Sigmoid colon (tissue), 7 donors: ENCODE measurements at regions of chr19 and their contacts with region 1.

Region 1: GRCh38 chr19:48492925-48493717 is 18.5 kb downstream of the LMTK3 start:
- DNase-seq: peak; percentile 98
- H3K4me3 ChIP-seq: peak overlapping the region; percentile 39 to 56 (median 50)
- H3K27ac ChIP-seq: peak overlapping the region; percentile 64 to 83 (median 75)
- H3K4me1 ChIP-seq: peaks cover 0 to 35% (median 29%) of the 10 kb centered on the region in 4 donors
- H3K27me3 ChIP-seq: peaks cover 5 to 44% (median 21%) of the 10 kb centered on the region in 3 donors
- CTCF ChIP-seq: no peak
- EP300 ChIP-seq: no peak
- POLR2A ChIP-seq: peak in 1 of 2 donors; percentile 73

Region 2: GRCh38 chr19:48391107-48391986 is 101.8 kb before region 1 on chr19 and contains the start of gene KDELR1:
- intact Hi-C with region 1: loop called (anchors 5 kb)
- DNase-seq: peak; percentile 89
- H3K4me3 ChIP-seq: peak within 1 kb of the TSS; percentile 74 to 98 (median 90)
- H3K27ac ChIP-seq: peak within 1 kb of the TSS; percentile 87 to 94 (median 93)
- H3K4me1 ChIP-seq: peaks cover 0 to 36% (median 30%) of the 10 kb centered on the region in 4 donors
- H3K27me3 ChIP-seq: peaks cover 26 to 45% (median 43%) of the 10 kb centered on the region in 3 donors
- CTCF ChIP-seq: peak in 3 of 4 experiments; percentile 68 to 93 (median 75)
- EP300 ChIP-seq: no peak
- POLR2A ChIP-seq: peak; percentile 64 to 70
- total RNA-seq, gene KDELR1: 61.5 to 109 (median 71.1) TPM

Region 3: DNA sequence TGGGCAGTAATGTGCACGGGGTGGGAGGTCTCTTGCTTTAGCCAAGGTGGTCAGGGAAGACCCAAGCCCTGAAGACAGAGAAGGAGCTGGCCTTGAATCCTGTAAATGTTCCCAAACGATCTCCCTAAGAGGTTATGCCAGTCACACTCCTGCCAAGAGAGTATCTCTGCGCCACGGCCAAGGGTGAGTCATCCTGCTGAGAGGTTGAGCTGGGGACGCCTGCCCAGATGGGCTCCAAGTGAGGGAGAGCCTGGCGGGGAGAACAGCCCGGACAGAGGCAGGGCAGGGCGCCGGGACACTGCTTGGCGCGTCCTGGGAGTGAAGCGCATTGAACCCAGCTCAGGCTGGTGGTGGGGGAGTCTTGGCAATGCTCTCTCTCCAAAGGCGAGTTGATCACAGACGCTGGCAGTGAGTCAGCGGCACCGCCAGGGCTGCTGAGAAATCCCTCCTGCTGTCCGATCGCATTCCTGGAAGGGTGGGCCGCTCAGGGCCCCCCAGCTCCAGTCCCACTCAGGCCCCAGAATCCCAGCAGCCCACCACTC is 75.3 kb after region 1 on chr19:
- intact Hi-C with region 1: loop called (anchors 5 kb)
- DNase-seq: peak; percentile 95
- H3K4me3 ChIP-seq: no peak overlapping the region
- H3K27ac ChIP-seq: peak overlapping the region; percentile 74 to 86 (median 80)
- H3K4me1 ChIP-seq: peaks cover 0 to 16% (median 13%) of the 10 kb centered on the region in 4 donors
- H3K27me3 ChIP-seq: no peaks in the 10 kb centered on the region
- CTCF ChIP-seq: no peak
- EP300 ChIP-seq: no peak
- POLR2A ChIP-seq: no peak

Region 4: GRCh38 chr19:48588670-48589399 is 95.7 kb after region 1 on chr19:
- intact Hi-C with region 1: loop called (anchors 1 kb)
- DNase-seq: peak; percentile 94
- H3K4me3 ChIP-seq: peak overlapping the region; percentile 28 to 49 (median 44)
- H3K27ac ChIP-seq: peak overlapping the region in 3 of 4 donors; percentile 33 to 48 (median 44)
- H3K4me1 ChIP-seq: peaks cover 0 to 21% (median 8%) of the 10 kb centered on the region in 4 donors
- H3K27me3 ChIP-seq: no peaks in the 10 kb centered on the region
- CTCF ChIP-seq: peak; percentile 93 to 96 (median 94)
- EP300 ChIP-seq: no peak
- POLR2A ChIP-seq: no peak